OCI-LY7 (cell line): ENCODE measurements at regions of chr1 and their contacts with region 1.

Region 1: DNA sequence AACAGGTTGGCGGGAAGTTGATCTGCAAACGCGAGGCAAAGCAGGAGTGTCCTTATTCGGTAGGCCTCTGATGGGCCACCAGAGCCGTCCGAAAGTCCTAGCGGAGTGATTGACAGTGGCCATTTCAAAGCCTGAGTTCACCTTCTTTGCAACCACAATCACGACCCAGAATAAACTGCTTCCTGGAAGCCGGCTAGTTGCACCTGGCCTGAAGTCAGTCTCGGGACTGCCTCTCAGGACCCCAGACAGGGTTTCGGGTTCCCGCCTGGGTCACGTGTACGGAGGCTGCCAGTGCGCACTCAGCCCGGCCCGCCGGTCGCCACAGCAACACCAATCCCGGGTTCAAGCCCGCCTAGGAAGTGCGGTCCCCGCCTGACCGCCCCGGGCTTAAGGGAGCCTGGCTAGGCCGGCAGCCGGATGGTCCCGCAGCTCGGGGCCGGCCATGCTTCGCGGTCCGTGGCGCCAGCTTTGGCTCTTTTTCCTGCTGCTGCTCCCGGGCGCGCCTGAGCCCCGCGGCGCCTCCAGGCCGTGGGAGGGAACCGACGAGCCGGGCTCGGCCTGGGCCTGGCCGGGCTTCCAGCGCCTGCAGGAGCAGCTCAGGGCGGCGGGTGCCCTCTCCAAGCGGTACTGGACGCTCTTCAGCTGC is at the start of gene TOR3A:
- DNase-seq: peak; percentile 96
- H3K4me3 ChIP-seq: peak within 1 kb of the TSS; percentile 90
- H3K27ac ChIP-seq: peak within 1 kb of the TSS; percentile 91
- H3K4me1 ChIP-seq: peaks cover 37% of the 10 kb centered on the region
- CTCF ChIP-seq: no peak
- total RNA-seq, gene TOR3A: 32.9 and 49.0 TPM in 2 replicates

Region 2: GRCh38 chr1:178575611-178576331 is 506.0 kb before region 1 on chr1:
- CTCF ChIA-PET with region 1: no interaction called
- POLR2A ChIA-PET with region 1: interaction called, 3 read pairs
- intact Hi-C with region 1: loop called (anchors 5 kb)
- DNase-seq: peak; percentile 83
- H3K4me3 ChIP-seq: peak overlapping the region; percentile 67
- H3K27ac ChIP-seq: peak overlapping the region; percentile 99
- H3K4me1 ChIP-seq: peaks cover 91% of the 10 kb centered on the region
- CTCF ChIP-seq: no peak

Region 3: DNA sequence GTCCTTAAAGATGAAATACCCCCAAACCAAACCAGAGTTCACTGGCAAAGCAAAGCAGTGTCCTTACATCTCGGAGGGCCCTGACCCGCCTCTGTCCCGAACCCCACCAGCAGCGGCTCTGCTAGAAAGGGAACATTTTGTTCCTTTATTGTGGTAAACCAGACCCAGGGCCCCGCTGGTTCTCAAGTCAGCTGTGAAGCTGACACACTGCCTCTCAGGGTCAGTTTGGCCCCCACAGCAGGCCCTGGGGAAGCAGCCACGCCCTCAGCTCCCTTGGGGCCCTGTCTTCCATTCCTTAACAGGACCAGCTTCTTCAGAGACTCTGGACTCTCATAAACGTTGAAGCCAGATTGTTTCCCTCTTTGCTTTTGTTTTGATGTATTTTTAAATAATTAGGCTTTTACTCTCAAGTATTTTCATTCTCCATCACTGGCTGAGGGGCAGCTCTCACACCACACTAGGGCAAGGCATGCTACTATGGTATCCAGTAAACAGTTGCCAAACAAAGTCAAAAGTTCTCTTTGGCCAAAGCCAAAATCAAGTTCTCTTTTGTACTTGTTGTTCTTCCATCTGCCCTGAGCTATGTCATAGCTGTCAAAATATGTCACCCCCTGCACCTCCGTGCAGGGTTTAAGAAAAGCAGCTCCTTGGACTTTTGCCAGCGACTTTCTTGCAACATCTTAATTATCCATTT is 149.8 kb before region 1 on chr1:
- CTCF ChIA-PET with region 1: no interaction called
- POLR2A ChIA-PET with region 1: no interaction called
- intact Hi-C with region 1: no loop called
- DNase-seq: no peak
- H3K4me3 ChIP-seq: no peak overlapping the region
- H3K27ac ChIP-seq: no peak overlapping the region
- H3K4me1 ChIP-seq: no peaks in the 10 kb centered on the region
- CTCF ChIP-seq: no peak

Region 4: DNA sequence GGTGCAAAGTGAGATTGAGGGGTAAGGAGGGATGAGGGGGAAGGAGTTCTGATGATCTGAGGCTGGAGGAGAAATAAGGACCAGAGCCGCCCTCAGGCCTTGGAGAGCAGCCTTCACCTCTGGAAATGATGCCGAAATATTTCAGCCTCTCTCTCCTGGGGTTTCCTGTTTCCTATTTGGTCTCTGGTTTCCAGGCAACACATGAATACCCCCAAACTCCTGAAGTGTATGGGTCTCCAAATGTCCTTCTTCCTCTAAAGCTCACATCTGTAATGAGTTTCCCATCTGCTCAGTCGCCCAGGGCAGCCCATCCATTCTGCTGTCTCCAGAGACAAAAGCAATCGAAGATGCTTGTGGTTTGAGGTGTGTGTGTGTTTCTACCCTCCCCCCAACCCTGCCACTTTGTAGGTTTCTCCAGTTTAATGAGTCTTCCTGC is 108.1 kb before region 1 on chr1:
- CTCF ChIA-PET with region 1: interaction called, 21 read pairs
- POLR2A ChIA-PET with region 1: no interaction called
- intact Hi-C with region 1: no loop called
- DNase-seq: peak; percentile 65
- H3K4me3 ChIP-seq: peak overlapping the region; percentile 34
- H3K27ac ChIP-seq: peak overlapping the region; percentile 68
- H3K4me1 ChIP-seq: peaks cover 29% of the 10 kb centered on the region
- CTCF ChIP-seq: no peak

Region 5: GRCh38 chr1:179034720-179035119 is 47.1 kb before region 1 on chr1:
- CTCF ChIA-PET with region 1: no interaction called
- POLR2A ChIA-PET with region 1: interaction called, 27 read pairs
- intact Hi-C with region 1: loop called (anchors 1 kb)
- DNase-seq: peak; percentile 69
- H3K4me3 ChIP-seq: peak overlapping the region; percentile 57
- H3K27ac ChIP-seq: peak overlapping the region; percentile 82
- H3K4me1 ChIP-seq: peaks cover 98% of the 10 kb centered on the region
- CTCF ChIP-seq: no peak

Region 6: DNA sequence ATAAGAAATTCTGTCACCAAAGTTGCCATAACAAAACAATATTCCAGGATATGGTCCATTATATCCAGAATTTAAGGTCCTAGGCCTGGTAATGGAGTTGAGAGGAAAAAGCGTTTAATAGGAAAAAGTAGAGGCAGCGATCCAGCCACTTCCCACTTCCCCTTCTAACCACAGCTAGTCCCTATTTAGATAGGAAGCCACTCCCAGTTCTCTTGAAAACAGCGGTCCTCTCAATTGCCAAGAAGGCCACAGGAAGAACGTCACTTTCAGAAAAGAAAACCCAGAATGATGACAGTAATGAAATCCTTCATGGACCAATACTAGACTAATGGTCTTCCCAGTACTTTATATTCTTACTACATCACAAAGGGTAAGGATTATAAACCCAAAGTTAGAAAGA is 109.1 kb after region 1 on chr1:
- CTCF ChIA-PET with region 1: no interaction called
- POLR2A ChIA-PET with region 1: interaction called, 4 read pairs
- intact Hi-C with region 1: loop called (anchors 2 kb)
- DNase-seq: no peak
- H3K4me3 ChIP-seq: no peak overlapping the region
- H3K27ac ChIP-seq: no peak overlapping the region
- H3K4me1 ChIP-seq: no peaks in the 10 kb centered on the region
- CTCF ChIP-seq: no peak

Region 7: GRCh38 chr1:179293340-179294327 is 211.8 kb after region 1 on chr1 and contains the start of gene SOAT1:
- CTCF ChIA-PET with region 1: no interaction called
- POLR2A ChIA-PET with region 1: interaction called, 12 read pairs
- intact Hi-C with region 1: loop called (anchors 1 kb)
- DNase-seq: peak; percentile 97
- H3K4me3 ChIP-seq: peak within 1 kb of the TSS; percentile 80
- H3K27ac ChIP-seq: peak within 1 kb of the TSS; percentile 63
- H3K4me1 ChIP-seq: peaks cover 42% of the 10 kb centered on the region
- CTCF ChIP-seq: 0 out of 2 replicates have a peak, but pooled peaks have one; percentile 10
- total RNA-seq, gene SOAT1: 8.7 and 11.1 TPM in 2 replicates